WTC11 (cell line): ENCODE measurements at regions of chr11 and their contacts with region 1.

Region 1: GRCh38 chr11:86193297-86194095 is 51.1 kb upstream of the EED start:
- DNase-seq: peak; percentile 82
- ATAC-seq: peak; percentile 100
- H3K4me3 Mint-ChIP-seq: peak overlapping the region; percentile 47
- H3K27ac Mint-ChIP-seq: no peak overlapping the region
- H3K4me1 Mint-ChIP-seq: peaks cover 9% of the 10 kb centered on the region
- H3K27me3 Mint-ChIP-seq: peaks cover 8% of the 10 kb centered on the region
- CTCF ChIP-seq: peak; percentile 54

Region 2: GRCh38 chr11:86068951-86069407 is 124.5 kb before region 1 on chr11 and contains the start of gene PICALM:
- CTCF ChIA-PET with region 1: interaction called, 29 read pairs
- POLR2A ChIA-PET with region 1: no interaction called
- DNase-seq: peak; percentile 98
- ATAC-seq: peak; percentile 79
- H3K4me3 Mint-ChIP-seq: peak within 1 kb of the TSS; percentile 99
- H3K27ac Mint-ChIP-seq: peak within 1 kb of the TSS; percentile 98
- H3K4me1 Mint-ChIP-seq: peaks cover 40% of the 10 kb centered on the region
- H3K27me3 Mint-ChIP-seq: no peaks in the 10 kb centered on the region
- CTCF ChIP-seq: no peak
- total RNA-seq, gene PICALM: 64.4 to 69.9 TPM (median 65.1 TPM) in 3 replicates

Region 3: GRCh38 chr11:86218125-86219084 is 24.9 kb after region 1 on chr11:
- CTCF ChIA-PET with region 1: interaction called, 17 read pairs
- POLR2A ChIA-PET with region 1: no interaction called
- DNase-seq: peak; percentile 71
- ATAC-seq: peak; percentile 96
- H3K4me3 Mint-ChIP-seq: no peak overlapping the region
- H3K27ac Mint-ChIP-seq: no peak overlapping the region
- H3K4me1 Mint-ChIP-seq: peaks cover 9% of the 10 kb centered on the region
- H3K27me3 Mint-ChIP-seq: peaks cover 2% of the 10 kb centered on the region; the same call in 1 of the 2 replicates
- CTCF ChIP-seq: peak; percentile 51